A673 (cell line): ENCODE measurements at regions of chr17 and their contacts with region 1.

Region 1: DNA sequence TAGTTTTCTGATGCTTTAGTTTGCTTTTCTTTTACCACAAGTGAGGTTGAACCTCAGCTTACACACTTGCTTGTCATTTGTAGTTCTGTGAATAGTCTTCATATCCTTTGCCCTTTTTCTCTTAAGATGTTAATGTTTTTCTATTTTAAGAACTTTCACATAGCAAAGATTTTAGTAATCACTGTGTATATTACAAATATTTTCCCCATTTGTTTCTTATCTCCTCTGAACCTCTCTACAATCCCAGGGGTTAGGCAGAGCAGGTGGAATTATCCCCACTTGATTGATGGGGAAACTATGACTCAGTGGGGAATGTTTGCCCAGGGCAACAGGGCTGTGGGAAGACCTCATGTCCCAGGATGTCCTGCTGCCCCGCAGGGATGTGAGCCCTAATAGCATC is 11.7 kb upstream of the MYH3 start:
- DNase-seq: no peak
- H3K4me3 ChIP-seq: no peak overlapping the region
- H3K27ac ChIP-seq: no peak overlapping the region
- H3K4me1 ChIP-seq: no peaks in the 10 kb centered on the region
- H3K27me3 ChIP-seq: no peaks in the 10 kb centered on the region
- CTCF ChIP-seq: no peak

Region 2: GRCh38 chr17:10370209-10370608 is 298.6 kb before region 1 on chr17:
- CTCF ChIA-PET with region 1: no interaction called
- POLR2A ChIA-PET with region 1: no interaction called
- intact Hi-C with region 1: no loop called
- DNase-seq: no peak
- H3K4me3 ChIP-seq: no peak overlapping the region
- H3K27ac ChIP-seq: no peak overlapping the region
- H3K4me1 ChIP-seq: no peaks in the 10 kb centered on the region
- H3K27me3 ChIP-seq: no peaks in the 10 kb centered on the region
- CTCF ChIP-seq: no peak

Region 3: DNA sequence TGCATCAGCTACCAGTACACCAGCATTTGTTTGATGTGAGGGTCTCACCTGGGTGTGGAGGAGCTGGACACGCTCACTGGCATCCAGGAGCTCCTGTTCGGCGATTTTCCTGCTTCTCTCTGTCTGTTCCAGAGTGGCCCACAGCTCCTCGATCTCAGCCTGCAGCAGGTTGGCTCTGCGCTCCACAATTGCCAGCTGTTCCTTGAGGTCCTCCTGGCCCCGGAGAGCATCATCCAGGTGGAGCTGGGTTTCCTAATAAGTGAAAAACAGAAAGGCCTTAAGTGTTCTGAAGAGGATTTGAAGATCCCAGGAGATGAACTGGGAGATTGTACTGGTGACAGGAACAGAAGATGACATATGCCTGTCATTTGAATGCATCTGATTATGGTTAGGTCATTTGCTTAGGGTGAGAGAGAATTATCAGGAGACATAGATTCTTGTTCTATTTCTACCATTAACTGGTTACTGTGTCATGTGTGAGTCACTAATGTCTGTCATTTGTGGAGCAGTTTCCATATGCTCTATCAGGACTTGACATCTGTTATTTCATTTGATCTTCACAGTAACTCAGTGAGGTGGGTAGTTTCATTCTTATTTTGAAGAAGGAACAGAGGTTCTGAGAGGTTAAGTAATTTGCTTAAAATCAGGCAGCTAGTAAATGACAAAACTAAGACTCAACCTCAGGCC is 274.4 kb before region 1 on chr17:
- CTCF ChIA-PET with region 1: interaction called, 13 read pairs
- POLR2A ChIA-PET with region 1: no interaction called
- intact Hi-C with region 1: no loop called
- DNase-seq: no peak
- H3K4me3 ChIP-seq: no peak overlapping the region
- H3K27ac ChIP-seq: no peak overlapping the region
- H3K4me1 ChIP-seq: no peaks in the 10 kb centered on the region
- H3K27me3 ChIP-seq: no peaks in the 10 kb centered on the region
- CTCF ChIP-seq: no peak

Region 4: DNA sequence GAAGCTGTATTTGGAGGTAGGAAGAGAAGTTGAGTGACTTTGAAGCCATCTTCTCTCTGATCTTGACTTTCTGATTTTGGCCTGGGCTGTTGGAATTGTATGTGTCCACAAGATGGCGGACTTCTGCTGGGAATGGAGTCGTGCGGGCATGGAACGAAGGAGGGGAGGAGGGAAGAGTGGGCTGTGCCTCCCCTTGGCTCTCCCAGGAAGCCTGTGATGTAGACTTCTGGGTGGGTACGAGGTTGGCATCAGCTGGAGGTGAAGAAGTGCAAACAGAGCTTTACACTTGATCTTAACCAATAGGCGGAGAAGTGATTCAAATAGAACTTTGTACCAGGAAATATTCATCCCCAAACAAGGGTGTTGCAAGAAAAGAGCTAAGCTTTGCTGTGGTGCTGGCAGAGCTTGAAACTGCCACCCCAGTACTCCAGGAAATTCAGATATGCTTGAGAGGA is 68.4 kb after region 1 on chr17:
- CTCF ChIA-PET with region 1: no interaction called
- POLR2A ChIA-PET with region 1: no interaction called
- intact Hi-C with region 1: no loop called
- DNase-seq: peak; percentile 79
- H3K4me3 ChIP-seq: no peak overlapping the region
- H3K27ac ChIP-seq: no peak overlapping the region
- H3K4me1 ChIP-seq: no peaks in the 10 kb centered on the region
- H3K27me3 ChIP-seq: peaks cover 8% of the 10 kb centered on the region
- CTCF ChIP-seq: peak; percentile 90